HCT116 (cell line): ENCODE measurements at regions of chr5 and their contacts with region 1.

Region 1: GRCh38 chr5:115377468-115378217 is 81.2 kb upstream of the CCDC112 start:
- DNase-seq: peak; percentile 35
- ATAC-seq: peak; percentile 61
- H3K4me3 ChIP-seq: peak overlapping the region; percentile 16 to 33
- H3K27ac ChIP-seq: peak overlapping the region; percentile 2; the same call in 1 of the 2 replicates
- H3K4me1 ChIP-seq: peaks cover 18 to 64% of the 10 kb centered on the region in 2 experiments
- H3K27me3 ChIP-seq: no peaks in the 10 kb centered on the region
- CTCF ChIP-seq: peak; percentile 30 to 58 (median 49); a peak in 4 of 6 replicates
- POLR2A ChIP-seq: no peak
- RAD21 ChIP-seq: peak; percentile 77

Region 2: GRCh38 chr5:115460472-115460871 is 82.8 kb after region 1 on chr5:
- CTCF ChIA-PET with region 1: interaction called, 3 read pairs
- POLR2A ChIA-PET with region 1: interaction called, 6 read pairs
- RAD21 ChIA-PET with region 1: no interaction called
- intact Hi-C with region 1: loop called (anchors 5 kb)
- DNase-seq: peak; percentile 87
- ATAC-seq: peak; percentile 58
- H3K4me3 ChIP-seq: peak overlapping the region in 1 of 2 experiments; percentile 27; a peak in 2 of 4 replicates
- H3K27ac ChIP-seq: peak overlapping the region; percentile 73
- H3K4me1 ChIP-seq: peaks cover 25 to 97% of the 10 kb centered on the region in 2 experiments
- H3K27me3 ChIP-seq: no peaks in the 10 kb centered on the region
- CTCF ChIP-seq: no peak
- POLR2A ChIP-seq: no peak
- RAD21 ChIP-seq: peak; percentile 29; the same call in 1 of the 2 replicates

Region 3: GRCh38 chr5:115544436-115545350 is 167.1 kb after region 1 on chr5 and contains the start of gene FEM1C:
- CTCF ChIA-PET with region 1: interaction called, 3 read pairs
- POLR2A ChIA-PET with region 1: no interaction called
- RAD21 ChIA-PET with region 1: no interaction called
- intact Hi-C with region 1: loop called (anchors 2 kb)
- DNase-seq: peak; percentile 87
- ATAC-seq: peak; percentile 98
- H3K4me3 ChIP-seq: peak within 1 kb of the TSS; percentile 77 to 86
- H3K27ac ChIP-seq: peak within 1 kb of the TSS; percentile 87
- H3K4me1 ChIP-seq: peaks cover 0 to 32% of the 10 kb centered on the region in 2 experiments; a peak in 3 of 4 replicates
- H3K27me3 ChIP-seq: no peaks in the 10 kb centered on the region
- CTCF ChIP-seq: no peak
- POLR2A ChIP-seq: peak; percentile 90
- RAD21 ChIP-seq: peak; percentile 30; the same call in 1 of the 2 replicates
- total RNA-seq, gene FEM1C: 27.5 TPM

Region 4: GRCh38 chr5:115579747-115580173 is 202.1 kb after region 1 on chr5:
- CTCF ChIA-PET with region 1: interaction called, 45 read pairs
- POLR2A ChIA-PET with region 1: interaction called, 6 read pairs
- RAD21 ChIA-PET with region 1: interaction called, 7 to 15 read pairs
- intact Hi-C with region 1: loop called (anchors 1 kb)
- DNase-seq: no peak
- ATAC-seq: no peak
- H3K4me3 ChIP-seq: no peak overlapping the region
- H3K27ac ChIP-seq: no peak overlapping the region
- H3K4me1 ChIP-seq: peaks cover 0 to 22% of the 10 kb centered on the region in 2 experiments; a peak in 3 of 4 replicates
- H3K27me3 ChIP-seq: no peaks in the 10 kb centered on the region
- CTCF ChIP-seq: no peak
- POLR2A ChIP-seq: no peak
- RAD21 ChIP-seq: no peak

Region 5: DNA sequence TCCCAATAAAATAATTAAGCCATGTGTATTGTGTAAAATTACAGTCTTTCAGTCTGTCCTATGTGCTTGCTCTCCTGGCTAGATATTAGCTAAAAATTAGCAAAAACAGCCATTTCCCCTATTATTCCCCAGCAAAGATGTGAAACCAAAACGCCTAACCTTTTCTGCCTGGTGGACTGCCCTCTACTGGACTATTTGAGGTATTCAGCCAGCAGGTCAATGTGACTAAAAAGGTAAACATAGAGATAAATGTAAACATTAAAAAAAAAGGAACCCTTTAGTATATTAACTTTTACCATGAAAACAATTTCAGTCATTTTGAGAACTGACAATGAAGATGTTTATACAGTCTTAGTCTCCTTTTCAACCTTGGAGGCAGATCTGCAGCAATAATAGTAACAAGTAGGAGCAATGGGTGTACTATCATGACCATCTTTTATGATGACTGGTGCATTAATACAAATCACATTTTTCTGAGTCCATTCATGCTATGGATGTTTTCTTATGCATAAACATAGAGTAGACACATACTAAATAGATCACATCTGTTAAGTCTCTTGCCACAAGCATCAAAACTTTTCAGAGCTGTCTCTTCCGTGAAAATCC is 453.6 kb after region 1 on chr5:
- CTCF ChIA-PET with region 1: no interaction called
- POLR2A ChIA-PET with region 1: no interaction called
- RAD21 ChIA-PET with region 1: no interaction called
- intact Hi-C with region 1: loop called (anchors 10 kb)
- DNase-seq: no peak
- ATAC-seq: 0 out of 2 replicates have a peak, but pooled peaks have one; percentile 45
- H3K4me3 ChIP-seq: no peak overlapping the region
- H3K27ac ChIP-seq: no peak overlapping the region
- H3K4me1 ChIP-seq: no peaks in the 10 kb centered on the region
- H3K27me3 ChIP-seq: no peaks in the 10 kb centered on the region
- CTCF ChIP-seq: peak; percentile 43 to 82 (median 75); a peak in 5 of 6 replicates
- POLR2A ChIP-seq: no peak
- RAD21 ChIP-seq: peak; percentile 61